ENCODE measurements at regions of chr20 and their contacts with region 1.

Region 1: GRCh38 chr20:49219089-49219923 is at the start of gene DDX27:
- DNase-seq: peak; percentile 99
- ATAC-seq: peak; percentile 90
- H3K4me3 ChIP-seq: peak within 1 kb of the TSS; percentile 76
- H3K27ac ChIP-seq: peak within 1 kb of the TSS; percentile 85
- H3K4me1 ChIP-seq: peaks cover 4% of the 10 kb centered on the region; the same call in 1 of the 2 replicates
- H3K27me3 ChIP-seq: no peaks in the 10 kb centered on the region
- CTCF ChIP-seq: no peak
- POLR2A ChIP-seq: peak; percentile 86
- RAD21 ChIP-seq: no peak
- total RNA-seq, gene DDX27: 28.3 and 33.2 TPM in 2 replicates

Region 2: DNA sequence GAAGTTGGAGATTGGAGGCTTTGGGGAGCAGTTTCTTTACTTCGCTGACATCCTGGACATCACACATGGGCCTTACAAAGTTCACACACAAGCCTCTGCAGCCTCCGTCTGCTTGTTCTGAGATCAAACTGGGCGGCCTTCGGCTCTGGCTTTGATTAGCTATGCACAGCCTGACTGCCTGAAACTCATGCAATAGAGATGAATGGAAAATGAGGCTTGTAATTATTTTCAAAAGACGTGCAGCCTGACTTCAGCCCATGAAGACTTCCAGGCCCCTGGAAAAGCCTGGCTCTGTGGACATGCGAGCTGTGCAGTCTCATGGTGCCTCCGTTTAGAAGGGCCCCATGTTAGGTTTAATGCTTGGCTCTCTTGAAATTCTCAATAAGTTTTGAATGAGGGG is 953.5 kb before region 1 on chr20:
- CTCF ChIA-PET with region 1: no interaction called
- POLR2A ChIA-PET with region 1: no interaction called
- dilution Hi-C with region 1: no loop called
- in situ Hi-C with region 1: no loop called
- intact Hi-C with region 1: no loop called
- DNase-seq: no peak
- ATAC-seq: no peak
- H3K4me3 ChIP-seq: no peak overlapping the region
- H3K27ac ChIP-seq: no peak overlapping the region
- H3K4me1 ChIP-seq: no peaks in the 10 kb centered on the region
- H3K27me3 ChIP-seq: peaks cover 2% of the 10 kb centered on the region; the same call in 1 of the 2 replicates
- CTCF ChIP-seq: no peak
- POLR2A ChIP-seq: no peak
- RAD21 ChIP-seq: no peak

Region 3: GRCh38 chr20:48538420-48539203 is 680.7 kb before region 1 on chr20:
- CTCF ChIA-PET with region 1: no interaction called
- POLR2A ChIA-PET with region 1: no interaction called
- dilution Hi-C with region 1: no loop called
- in situ Hi-C with region 1: no loop called
- intact Hi-C with region 1: no loop called
- DNase-seq: peak; percentile 52
- ATAC-seq: no peak; the same call in 1 of the 2 replicates
- H3K4me3 ChIP-seq: no peak overlapping the region
- H3K27ac ChIP-seq: no peak overlapping the region
- H3K4me1 ChIP-seq: no peaks in the 10 kb centered on the region
- H3K27me3 ChIP-seq: no peaks in the 10 kb centered on the region; the same call in 1 of the 2 replicates
- CTCF ChIP-seq: no peak
- POLR2A ChIP-seq: no peak
- RAD21 ChIP-seq: no peak

Region 4: DNA sequence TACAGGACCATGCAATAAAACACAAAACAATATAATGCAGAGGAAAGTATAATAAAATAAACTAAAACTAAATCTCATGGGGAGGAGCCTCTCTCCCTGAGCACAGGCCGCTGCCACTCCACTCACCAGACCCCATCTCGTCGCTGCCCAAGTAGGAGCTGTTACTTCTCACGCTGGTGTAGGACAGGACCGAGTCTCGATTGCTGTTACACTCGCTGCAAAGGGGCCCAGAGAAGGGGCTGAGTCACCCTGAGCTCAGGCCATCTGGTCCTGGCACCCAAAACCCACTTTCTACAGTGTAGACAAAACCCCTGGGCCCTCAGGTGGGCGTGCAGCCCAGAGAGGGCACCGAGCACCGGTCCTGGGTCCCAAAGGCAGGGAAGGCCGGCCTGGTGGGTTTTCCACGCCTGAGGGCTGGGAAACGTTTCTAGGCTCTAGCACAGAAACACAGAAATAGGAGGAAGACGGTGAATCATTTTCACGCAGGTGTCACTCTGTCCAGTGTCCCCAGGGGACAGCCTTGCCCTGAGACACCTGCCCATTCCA is 575.0 kb before region 1 on chr20:
- CTCF ChIA-PET with region 1: no interaction called
- POLR2A ChIA-PET with region 1: no interaction called
- dilution Hi-C with region 1: no loop called
- in situ Hi-C with region 1: no loop called
- intact Hi-C with region 1: loop called (anchors 5 kb)
- DNase-seq: no peak
- ATAC-seq: no peak
- H3K4me3 ChIP-seq: no peak overlapping the region
- H3K27ac ChIP-seq: no peak overlapping the region
- H3K4me1 ChIP-seq: no peaks in the 10 kb centered on the region
- H3K27me3 ChIP-seq: peaks cover 2% of the 10 kb centered on the region; the same call in 1 of the 2 replicates
- CTCF ChIP-seq: no peak
- POLR2A ChIP-seq: no peak
- RAD21 ChIP-seq: no peak

Region 5: DNA sequence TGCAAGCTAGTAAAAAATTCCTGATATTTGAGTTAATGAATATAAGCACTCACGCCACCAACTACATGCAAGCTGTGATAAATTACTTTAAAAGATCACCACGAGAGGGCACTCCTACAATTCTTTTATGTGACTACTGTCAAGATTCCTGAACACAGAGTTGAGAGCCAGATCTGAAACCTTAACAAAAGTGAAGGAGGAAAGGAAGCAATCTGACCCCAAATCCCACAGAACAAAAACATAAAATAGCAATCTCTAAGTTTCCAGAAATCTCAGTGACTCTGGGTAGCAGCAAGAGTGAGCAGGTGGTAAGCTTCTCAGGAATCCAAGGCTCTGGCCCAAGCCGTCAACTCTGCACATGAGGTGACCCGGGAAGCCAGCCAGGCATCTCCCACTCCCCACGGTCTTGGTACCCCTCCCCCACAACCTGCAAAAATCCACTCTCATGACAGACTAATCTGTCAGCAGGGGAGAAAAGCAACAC is 86.3 kb before region 1 on chr20:
- CTCF ChIA-PET with region 1: interaction called, 11 read pairs
- POLR2A ChIA-PET with region 1: no interaction called
- dilution Hi-C with region 1: no loop called
- in situ Hi-C with region 1: loop called (anchors 5 kb)
- intact Hi-C with region 1: loop called (anchors 1 kb)
- DNase-seq: peak; percentile 79
- ATAC-seq: peak; percentile 88
- H3K4me3 ChIP-seq: no peak overlapping the region
- H3K27ac ChIP-seq: no peak overlapping the region
- H3K4me1 ChIP-seq: peaks cover 5% of the 10 kb centered on the region; the same call in 1 of the 2 replicates
- H3K27me3 ChIP-seq: no peaks in the 10 kb centered on the region
- CTCF ChIP-seq: peak; percentile 68
- POLR2A ChIP-seq: no peak
- RAD21 ChIP-seq: peak; percentile 67

Measured in IMR-90 (cell line).